BJ (cell line): ENCODE measurements at regions of chr2 and their contacts with region 1.

Region 1: GRCh38 chr2:163682692-163683091 is 53.1 kb downstream of the FIGN start:
- DNase-seq: no peak
- H3K4me3 ChIP-seq: no peak overlapping the region
- H3K27me3 ChIP-seq: no peaks in the 10 kb centered on the region
- CTCF ChIP-seq: peak; percentile 31; the same call in 1 of the 2 replicates

Region 2: GRCh38 chr2:163717993-163718680 is 35.4 kb after region 1 on chr2:
- CTCF ChIA-PET with region 1: no interaction called
- POLR2A ChIA-PET with region 1: interaction called, 10 read pairs
- DNase-seq: no peak
- H3K4me3 ChIP-seq: no peak overlapping the region
- H3K27me3 ChIP-seq: no peaks in the 10 kb centered on the region
- CTCF ChIP-seq: no peak